Cardiac septum (tissue), 1 donor: ENCODE measurements at regions of chr1 and their contacts with region 1.

Region 1: GRCh38 chr1:20212685-20213331 is 26.5 kb upstream of the PLA2G2C start:
- DNase-seq: no peak

Region 2: DNA sequence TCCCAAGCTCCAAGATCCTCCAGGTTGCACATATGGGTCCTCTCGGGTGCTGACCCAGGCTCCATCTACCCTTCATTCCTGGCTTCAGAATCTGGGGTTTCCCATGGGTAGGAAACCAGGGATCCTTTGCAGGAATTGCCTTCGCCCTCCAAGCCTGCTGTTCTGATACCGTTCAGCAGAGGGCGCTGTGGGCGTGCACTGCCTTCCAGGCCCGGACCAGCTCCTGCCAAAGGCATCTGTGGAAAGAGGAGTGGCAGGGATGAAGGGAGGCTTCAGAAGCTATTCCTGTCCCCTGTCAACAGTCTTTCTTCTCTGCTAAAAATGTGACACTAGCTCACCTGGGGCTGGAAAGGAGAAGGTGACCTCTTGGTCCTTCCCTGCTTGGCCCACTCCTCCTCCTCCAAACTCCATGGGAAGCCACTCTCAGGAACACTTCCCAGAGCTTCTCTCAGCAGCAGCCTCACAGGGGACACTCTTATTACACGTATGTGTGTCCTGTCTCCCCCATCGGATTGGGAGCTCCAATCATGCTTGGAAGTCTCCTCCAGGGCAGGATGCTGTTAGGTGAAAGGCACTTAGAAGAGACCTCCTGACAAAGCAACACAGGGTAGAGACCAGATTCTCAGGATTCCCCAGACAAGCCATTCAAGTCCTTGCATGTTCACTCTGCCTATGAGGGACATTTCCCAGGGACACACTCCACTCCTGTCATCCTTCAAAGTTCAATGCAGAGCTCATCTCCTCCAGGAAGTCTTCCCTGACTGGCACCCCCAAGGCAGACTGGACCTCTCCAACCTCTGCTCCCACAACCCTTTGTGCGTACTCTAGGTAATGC is 149.2 kb after region 1 on chr1:
- intact Hi-C with region 1: loop called (anchors 5 kb)
- DNase-seq: peak; percentile 80

Region 3: DNA sequence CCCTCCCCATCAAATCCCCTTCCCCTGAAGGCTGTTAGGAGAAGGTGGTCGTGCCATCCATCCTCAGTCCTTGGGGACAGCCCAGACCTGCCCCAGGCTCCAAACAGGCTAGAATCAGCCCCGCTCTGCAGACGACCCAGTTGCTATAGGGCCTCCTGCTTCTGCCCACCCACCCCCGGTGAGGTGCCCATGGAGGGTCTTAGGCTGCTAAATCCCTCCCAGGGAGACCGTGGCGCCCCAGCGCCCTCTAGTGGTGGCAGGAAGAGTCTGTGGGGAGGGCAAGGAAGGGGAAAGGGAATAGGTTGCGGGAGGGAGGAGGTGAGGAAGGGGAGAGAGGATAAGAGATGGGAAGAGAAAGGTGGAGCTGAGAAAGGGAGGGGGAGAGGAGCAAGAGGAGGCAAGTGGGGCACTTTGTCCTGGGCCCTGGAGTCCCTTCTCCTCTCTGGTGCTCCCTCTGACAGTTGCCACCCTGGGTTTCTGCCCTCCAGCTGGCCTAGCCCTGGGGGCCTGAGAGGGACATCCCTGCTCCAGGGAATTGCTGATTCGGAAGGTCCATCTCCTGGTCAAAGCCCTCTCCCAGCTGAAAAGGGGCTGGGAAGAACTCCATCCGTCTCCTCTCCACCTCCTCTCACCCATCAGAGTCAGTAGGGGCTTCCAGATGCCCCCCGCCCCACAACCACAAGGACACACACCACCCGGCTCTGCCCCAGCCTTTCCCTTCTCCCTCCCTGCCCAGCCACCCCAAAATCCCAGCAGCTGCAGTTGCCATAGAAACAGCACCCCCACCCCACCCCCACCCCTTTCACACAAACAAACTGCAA is 217.8 kb after region 1 on chr1:
- intact Hi-C with region 1: loop called (anchors 5 kb)
- DNase-seq: no peak